Psoas muscle (tissue), 8 donors: ENCODE measurements at regions of chr13 and their contacts with region 1.

Region 1: DNA sequence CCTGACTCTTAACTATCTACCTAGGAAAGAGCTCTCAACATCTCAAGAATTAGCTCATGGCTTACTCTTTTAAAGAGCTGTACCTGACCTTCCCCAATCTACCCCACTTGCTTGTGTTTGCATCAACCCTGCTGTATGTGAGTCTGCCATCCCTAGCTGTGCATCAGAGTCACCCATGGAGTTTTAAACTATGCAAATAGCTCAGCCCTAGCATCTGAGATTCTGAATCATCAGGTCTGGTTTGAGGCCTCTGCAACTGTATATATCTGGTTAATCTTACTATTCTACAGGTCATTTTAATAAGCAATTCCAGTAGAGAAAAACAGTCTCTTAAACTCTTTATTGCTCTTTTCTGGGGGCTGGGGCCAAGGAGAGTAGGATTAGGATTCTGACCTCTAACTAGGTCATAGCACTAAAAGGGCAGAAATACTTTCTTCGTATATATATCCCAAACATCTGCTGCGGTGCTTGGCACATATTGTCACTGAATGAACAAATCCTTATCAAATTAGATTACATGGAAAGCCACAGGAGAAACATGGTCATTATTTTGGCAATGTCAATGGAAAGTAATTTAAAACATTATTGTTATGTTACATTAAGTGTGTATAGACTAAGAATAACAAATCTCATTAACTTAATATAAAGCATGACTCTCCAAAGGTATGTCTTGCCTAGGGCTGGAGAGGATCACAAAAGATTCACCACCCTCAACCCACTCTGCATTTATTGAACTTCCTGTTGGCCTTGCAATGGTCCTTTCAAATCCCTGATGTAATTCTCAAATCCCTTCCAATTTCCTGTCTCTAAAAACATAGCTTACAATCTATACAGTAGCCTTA is 232.2 kb downstream of the DACH1 start:
- DNase-seq: no peak
- ATAC-seq: no peak
- H3K4me3 ChIP-seq: no peak overlapping the region
- H3K27ac ChIP-seq: no peak overlapping the region
- H3K4me1 ChIP-seq: no peaks in the 10 kb centered on the region
- H3K27me3 ChIP-seq: no peaks in the 10 kb centered on the region
- CTCF ChIP-seq: no peak

Region 2: DNA sequence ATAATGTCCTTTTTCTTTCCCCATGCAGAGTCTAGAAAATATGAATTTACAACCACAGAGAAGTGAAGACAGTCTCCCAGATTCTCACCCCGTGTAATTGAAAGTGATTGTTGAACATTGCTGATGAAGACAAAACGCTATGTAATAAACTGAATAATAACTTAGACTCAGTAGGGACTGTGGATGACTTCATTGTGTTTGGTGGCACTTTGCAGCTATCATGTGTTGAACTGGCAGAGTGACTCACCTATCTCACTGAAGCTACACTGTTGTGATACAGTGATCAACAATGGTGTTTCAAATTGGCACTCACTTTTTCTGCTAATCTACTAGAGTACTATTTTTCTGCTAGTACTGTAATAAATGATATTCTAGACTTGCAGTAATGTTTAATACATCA is 29.1 kb before region 1 on chr13:
- intact Hi-C with region 1: loop called in 1 of 2 experiments (anchors 2 kb)
- DNase-seq: no peak
- ATAC-seq: no peak
- H3K4me3 ChIP-seq: no peak overlapping the region
- H3K27ac ChIP-seq: no peak overlapping the region
- H3K4me1 ChIP-seq: no peaks in the 10 kb centered on the region
- H3K27me3 ChIP-seq: no peaks in the 10 kb centered on the region
- CTCF ChIP-seq: no peak